Common myeloid progenitor, CD34-positive (primary cell): ENCODE measurements at regions of chr1 and their contacts with region 1.

Region 1: GRCh38 chr1:72296481-72296880 is 14.1 kb upstream of the NEGR1 start:
- DNase-seq: no peak
- H3K4me3 ChIP-seq: no peak overlapping the region
- H3K27ac ChIP-seq: no peak overlapping the region
- H3K4me1 ChIP-seq: no peaks in the 10 kb centered on the region
- H3K27me3 ChIP-seq: no peaks in the 10 kb centered on the region

Region 2: GRCh38 chr1:71753746-71754145 is 542.7 kb before region 1 on chr1:
- CTCF ChIA-PET with region 1: no interaction called
- POLR2A ChIA-PET with region 1: no interaction called
- DNase-seq: no peak
- H3K4me3 ChIP-seq: no peak overlapping the region
- H3K27ac ChIP-seq: no peak overlapping the region
- H3K4me1 ChIP-seq: no peaks in the 10 kb centered on the region
- H3K27me3 ChIP-seq: no peaks in the 10 kb centered on the region

Region 3: GRCh38 chr1:72341661-72342060 is 45.2 kb after region 1 on chr1:
- CTCF ChIA-PET with region 1: interaction called, 17 read pairs
- POLR2A ChIA-PET with region 1: no interaction called
- DNase-seq: no peak
- H3K4me3 ChIP-seq: no peak overlapping the region
- H3K27ac ChIP-seq: no peak overlapping the region
- H3K4me1 ChIP-seq: no peaks in the 10 kb centered on the region
- H3K27me3 ChIP-seq: no peaks in the 10 kb centered on the region